ENCODE measurements at regions of chr13 and their contacts with region 1.

Region 1: GRCh38 chr13:32309312-32310133 is 5.6 kb downstream of the ZAR1L start:
- DNase-seq: no peak
- ATAC-seq: peak; percentile 32

Region 2: DNA sequence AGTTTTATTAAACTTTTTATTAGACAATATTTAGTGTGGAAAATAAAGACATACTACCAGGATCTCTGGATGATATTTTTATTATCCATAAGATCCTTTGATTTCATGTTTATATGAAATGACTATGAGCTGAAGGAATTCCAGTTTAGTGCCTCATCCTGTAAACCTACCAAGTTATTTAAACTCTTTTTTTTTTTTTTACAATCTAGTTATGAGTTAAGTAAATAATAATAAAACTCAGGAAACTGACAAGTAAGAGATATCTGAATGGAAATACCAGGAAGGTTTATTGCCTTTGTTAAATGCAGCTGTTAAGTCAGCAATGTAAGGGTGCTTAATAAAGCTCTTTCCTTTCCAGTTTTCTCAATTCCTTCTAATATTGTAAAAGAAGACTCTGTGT is 516.3 kb before region 1 on chr13:
- intact Hi-C with region 1: no loop called
- DNase-seq: no peak
- ATAC-seq: no peak

Region 3: GRCh38 chr13:32019612-32020233 is 289.8 kb before region 1 on chr13:
- intact Hi-C with region 1: loop called (anchors 10 kb)
- DNase-seq: no peak
- ATAC-seq: peak; percentile 57

Region 4: DNA sequence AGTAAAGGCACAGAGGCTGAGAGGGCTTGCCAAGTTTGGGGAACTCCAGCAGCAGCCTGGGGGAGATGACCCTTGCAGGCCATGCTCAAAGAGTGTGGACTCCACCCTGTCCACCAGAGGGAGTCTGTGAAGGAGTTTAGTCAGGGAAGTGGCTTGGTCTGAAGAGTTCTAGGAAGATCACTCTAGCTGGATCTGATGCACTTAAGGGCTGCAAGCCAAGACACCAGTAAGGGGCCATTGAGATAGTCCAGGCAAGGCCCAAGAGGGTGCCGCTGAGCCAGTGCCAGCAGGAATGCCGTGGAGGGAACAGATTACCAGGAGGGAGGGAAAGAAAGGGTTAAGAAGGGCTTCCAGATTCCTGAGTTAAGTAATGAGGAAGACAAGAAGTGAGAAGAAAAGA is 63.1 kb before region 1 on chr13:
- intact Hi-C with region 1: loop called (anchors 10 kb)
- DNase-seq: peak; percentile 41
- ATAC-seq: peak; percentile 86